GM13976 (cell line): ENCODE measurements at regions of chr22 and their contacts with region 1.

Region 1: DNA sequence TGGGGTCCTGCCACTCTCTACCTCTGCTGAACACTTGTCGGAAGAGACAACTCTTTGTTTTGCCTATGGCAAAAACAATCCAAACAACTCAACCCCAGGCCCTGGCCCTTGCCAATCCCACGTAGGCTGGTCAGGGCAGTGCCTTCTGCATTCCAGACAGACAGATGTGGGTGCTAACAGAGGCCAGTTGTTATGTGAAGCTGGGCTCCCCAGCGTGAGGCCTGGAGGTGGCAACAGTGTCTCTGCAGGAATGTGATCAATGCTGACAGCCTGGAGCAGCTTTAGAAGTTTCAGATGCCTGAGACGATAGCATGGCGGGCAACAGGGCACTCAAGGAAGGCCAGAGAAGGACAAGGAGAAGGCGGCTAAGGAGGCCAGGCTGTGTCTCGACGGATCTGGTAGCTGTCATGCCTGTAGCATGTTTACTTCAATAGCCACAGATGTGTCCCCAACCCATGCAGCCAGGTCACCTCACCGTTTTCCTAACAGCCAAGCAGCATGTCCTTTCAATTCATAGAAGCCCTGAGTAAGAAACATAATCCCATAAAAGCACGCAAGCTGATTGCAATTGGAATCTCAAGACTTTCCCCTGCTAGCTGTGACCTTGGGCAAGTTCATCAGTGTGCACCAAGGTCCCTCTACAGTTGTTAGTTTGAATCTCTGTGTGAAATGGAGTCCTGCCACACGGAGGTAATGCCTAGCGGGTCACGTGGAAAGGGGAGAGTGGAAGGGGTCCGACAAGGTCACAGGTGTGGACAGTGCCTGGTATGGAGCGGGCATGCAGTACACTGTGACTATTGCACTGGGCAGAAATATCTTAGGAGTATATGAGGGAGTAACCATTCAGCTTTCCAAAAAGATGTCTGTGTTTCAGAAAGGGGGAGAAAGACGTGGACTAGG is 14.2 kb upstream of the PPM1F start:
- DNase-seq: no peak
- CTCF ChIP-seq: no peak

Region 2: DNA sequence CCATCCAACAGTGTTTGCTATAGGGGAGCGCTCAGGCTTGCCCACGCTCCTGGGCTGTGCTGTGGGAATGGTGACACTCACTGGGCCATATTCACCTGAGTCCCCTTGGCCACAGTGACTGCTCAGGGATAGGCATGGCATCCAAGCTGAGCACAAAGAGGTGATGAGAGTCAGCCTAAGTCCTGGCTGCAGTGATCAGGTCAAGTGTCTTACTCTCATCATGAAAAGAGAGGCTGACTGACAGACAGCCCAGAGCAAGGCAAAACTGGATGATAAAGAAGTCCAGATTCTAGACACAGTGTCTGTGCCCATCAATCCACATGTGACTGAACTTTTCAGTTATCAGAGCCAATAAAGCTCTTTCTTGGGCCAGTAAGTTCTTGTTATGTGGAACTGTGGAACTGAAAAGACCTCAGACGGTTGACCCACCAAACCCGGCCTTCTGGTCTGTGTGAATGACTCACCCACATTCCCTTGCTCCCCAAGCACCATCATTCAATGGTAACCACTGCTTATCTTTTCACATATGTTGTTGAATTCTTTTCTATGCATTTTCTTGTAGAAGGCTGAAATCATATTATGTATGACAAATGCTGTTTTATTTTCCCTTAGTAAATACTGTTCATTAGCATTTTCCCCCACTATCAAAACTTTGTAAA is 188.0 kb before region 1 on chr22:
- in situ Hi-C with region 1: no loop called
- DNase-seq: no peak
- CTCF ChIP-seq: no peak

Region 3: GRCh38 chr22:21857481-21857914 is 109.4 kb before region 1 on chr22:
- in situ Hi-C with region 1: no loop called
- DNase-seq: peak; percentile 60
- CTCF ChIP-seq: no peak

Region 4: GRCh38 chr22:22123118-22123959 is 156.5 kb after region 1 on chr22:
- in situ Hi-C with region 1: no loop called
- DNase-seq: no peak
- CTCF ChIP-seq: no peak

Region 5: DNA sequence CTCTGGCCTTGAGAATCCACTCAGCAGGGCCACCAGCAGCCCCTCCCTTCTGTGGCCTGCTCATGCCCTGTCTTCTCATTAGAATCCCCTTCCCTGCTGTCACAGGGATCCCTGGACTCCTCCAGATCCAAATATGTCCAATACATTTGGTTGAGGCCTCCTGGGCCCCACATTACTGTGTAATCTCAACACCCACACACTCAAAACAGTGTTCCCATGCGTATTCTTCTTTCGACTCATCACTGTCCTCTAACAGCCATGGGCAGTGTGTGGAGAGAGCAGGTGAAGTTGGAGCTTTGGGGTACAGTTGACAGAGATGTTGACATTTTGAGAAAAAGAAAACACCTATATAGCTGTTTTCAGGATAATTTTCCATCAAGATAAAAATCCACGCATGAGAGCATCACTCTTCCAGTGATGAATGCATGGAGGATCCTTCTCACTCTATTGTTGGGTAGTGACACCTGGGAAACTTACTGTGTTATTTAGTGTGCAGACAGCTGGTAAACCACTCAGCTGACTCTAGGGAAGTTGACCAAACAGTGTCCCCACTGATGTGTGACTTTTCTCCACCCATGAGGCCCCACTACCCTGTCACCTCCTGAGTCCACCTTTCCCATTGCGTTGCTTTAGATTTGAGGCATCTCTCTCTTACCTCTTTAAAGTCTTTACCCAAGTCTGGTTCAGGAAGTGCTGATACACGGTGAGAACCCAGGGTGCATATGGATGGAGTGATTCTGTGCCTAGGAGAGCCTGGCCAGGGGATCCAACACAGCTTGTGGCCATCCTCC is 249.0 kb after region 1 on chr22:
- in situ Hi-C with region 1: loop called (anchors 5 kb)
- DNase-seq: no peak
- CTCF ChIP-seq: no peak